A673 (cell line): ENCODE measurements at regions of chr19 and their contacts with region 1.

Region 1: DNA sequence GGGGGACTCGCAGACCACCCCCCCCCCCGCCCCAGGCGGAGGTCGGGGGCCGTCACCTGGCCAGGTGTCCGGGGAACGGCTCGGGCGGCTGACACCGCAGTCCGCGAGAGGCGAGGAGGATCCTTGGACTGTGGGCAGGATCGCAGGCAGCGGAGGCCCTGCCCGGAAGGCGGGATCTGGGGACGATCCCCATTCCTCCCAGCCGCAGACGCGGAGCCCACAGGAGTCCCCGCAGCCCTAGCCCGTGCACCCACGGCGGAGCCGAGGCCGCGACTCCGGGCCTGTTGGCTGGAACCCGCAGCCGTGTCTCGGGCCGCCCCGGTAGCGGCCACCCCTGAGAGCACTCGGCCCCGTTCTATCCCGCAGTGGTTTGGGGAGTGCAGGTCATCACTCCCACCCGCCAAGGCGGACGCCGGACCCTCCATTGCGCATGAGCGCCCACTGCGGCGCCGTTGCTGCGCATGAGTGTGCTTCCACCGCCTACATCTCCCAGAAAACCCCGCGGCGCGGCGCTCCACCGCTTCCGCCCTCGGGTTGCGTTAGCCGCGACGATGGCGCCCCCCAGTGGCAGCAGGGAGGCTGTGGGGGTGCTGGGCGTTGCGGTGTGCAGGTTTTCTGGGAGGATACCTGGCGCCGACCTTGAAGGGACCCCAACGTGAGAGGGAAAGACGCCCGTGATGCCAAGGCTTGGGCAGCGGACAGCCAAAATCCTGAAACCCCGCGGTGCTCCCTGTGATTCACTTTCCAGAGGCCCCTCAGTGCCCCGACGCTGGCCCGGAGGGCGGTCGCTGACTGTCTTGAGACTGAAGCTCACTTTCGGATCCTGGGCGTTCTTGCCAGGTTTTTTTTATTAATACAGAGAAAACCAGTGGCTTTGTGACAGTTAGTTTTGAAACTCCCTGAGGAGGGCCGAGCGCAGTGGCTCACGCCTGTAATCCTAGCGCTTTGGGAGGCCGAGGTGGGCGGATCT is 4.4 kb upstream of the ZNF329 start:
- DNase-seq: peak; percentile 96
- H3K4me3 ChIP-seq: peak overlapping the region; percentile 87
- H3K27ac ChIP-seq: peak overlapping the region; percentile 65
- H3K4me1 ChIP-seq: no peaks in the 10 kb centered on the region
- H3K27me3 ChIP-seq: no peaks in the 10 kb centered on the region
- CTCF ChIP-seq: peak; percentile 98

Region 2: DNA sequence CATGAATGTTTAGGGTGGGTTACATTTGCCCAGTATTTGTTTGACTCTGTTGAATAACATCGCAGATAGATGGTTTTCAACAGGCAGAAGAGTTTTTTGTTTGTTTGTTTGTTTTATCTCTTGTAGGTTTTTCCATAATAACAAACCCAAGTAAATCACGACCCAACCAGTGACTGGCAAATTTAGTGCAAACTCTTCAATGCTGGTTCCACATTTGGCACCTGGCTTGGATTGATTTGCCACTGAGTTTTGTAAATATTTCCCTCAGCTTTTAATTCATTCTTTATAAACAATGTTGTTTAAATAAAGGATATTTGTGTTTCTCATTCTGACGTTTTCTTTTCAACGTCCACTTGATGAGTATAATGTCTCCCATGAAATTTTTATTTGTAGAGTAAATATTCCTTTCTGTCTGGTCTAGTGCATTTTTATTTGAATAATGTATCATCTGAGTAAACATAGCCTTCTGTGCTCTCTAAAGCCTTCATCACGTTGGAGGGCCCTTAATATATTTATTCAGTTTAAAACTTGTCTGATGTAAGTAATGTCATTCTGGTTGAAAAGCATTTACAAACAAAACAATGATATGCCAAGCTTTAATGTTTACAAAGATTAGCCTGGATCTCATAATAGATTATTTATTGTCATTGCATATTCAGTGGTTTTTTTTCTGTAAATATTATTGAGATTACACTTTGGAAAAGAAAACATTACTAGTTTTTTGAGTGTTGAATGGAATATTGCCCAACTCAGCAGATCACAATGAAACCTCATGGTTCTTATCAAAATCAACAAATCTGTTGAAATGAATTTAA is 1224.1 kb before region 1 on chr19:
- CTCF ChIA-PET with region 1: interaction called, 11 read pairs
- POLR2A ChIA-PET with region 1: no interaction called
- intact Hi-C with region 1: no loop called
- DNase-seq: no peak
- H3K4me3 ChIP-seq: no peak overlapping the region
- H3K27ac ChIP-seq: no peak overlapping the region
- H3K4me1 ChIP-seq: no peaks in the 10 kb centered on the region
- H3K27me3 ChIP-seq: no peaks in the 10 kb centered on the region
- CTCF ChIP-seq: no peak

Region 3: GRCh38 chr19:57410877-57411671 is 743.9 kb before region 1 on chr19 and contains the start of gene ZNF17:
- CTCF ChIA-PET with region 1: interaction called, 4 read pairs
- POLR2A ChIA-PET with region 1: no interaction called
- intact Hi-C with region 1: loop called (anchors 2 kb)
- DNase-seq: peak; percentile 97
- H3K4me3 ChIP-seq: peak within 1 kb of the TSS; percentile 91
- H3K27ac ChIP-seq: peak within 1 kb of the TSS; percentile 63
- H3K4me1 ChIP-seq: no peaks in the 10 kb centered on the region
- H3K27me3 ChIP-seq: no peaks in the 10 kb centered on the region
- CTCF ChIP-seq: no peak
- total RNA-seq, gene ZNF17: 13.1 and 19.2 TPM in 2 replicates

Region 4: GRCh38 chr19:57559404-57560025 is 595.4 kb before region 1 on chr19 and contains the start of gene ZNF550:
- CTCF ChIA-PET with region 1: no interaction called
- POLR2A ChIA-PET with region 1: no interaction called
- intact Hi-C with region 1: loop called (anchors 10 kb)
- DNase-seq: peak; percentile 92
- H3K4me3 ChIP-seq: peak within 1 kb of the TSS; percentile 96
- H3K27ac ChIP-seq: peak within 1 kb of the TSS; percentile 77
- H3K4me1 ChIP-seq: no peaks in the 10 kb centered on the region
- H3K27me3 ChIP-seq: no peaks in the 10 kb centered on the region
- CTCF ChIP-seq: no peak
- total RNA-seq, gene ZNF550: 9.6 and 11.5 TPM in 2 replicates

Region 5: GRCh38 chr19:58021541-58022282 is 133.3 kb before region 1 on chr19:
- CTCF ChIA-PET with region 1: interaction called, 3 read pairs
- POLR2A ChIA-PET with region 1: interaction called, 3 read pairs
- intact Hi-C with region 1: loop called (anchors 2 kb)
- DNase-seq: peak; percentile 69
- H3K4me3 ChIP-seq: no peak overlapping the region
- H3K27ac ChIP-seq: no peak overlapping the region
- H3K4me1 ChIP-seq: no peaks in the 10 kb centered on the region
- H3K27me3 ChIP-seq: no peaks in the 10 kb centered on the region
- CTCF ChIP-seq: peak; percentile 66

Region 6: DNA sequence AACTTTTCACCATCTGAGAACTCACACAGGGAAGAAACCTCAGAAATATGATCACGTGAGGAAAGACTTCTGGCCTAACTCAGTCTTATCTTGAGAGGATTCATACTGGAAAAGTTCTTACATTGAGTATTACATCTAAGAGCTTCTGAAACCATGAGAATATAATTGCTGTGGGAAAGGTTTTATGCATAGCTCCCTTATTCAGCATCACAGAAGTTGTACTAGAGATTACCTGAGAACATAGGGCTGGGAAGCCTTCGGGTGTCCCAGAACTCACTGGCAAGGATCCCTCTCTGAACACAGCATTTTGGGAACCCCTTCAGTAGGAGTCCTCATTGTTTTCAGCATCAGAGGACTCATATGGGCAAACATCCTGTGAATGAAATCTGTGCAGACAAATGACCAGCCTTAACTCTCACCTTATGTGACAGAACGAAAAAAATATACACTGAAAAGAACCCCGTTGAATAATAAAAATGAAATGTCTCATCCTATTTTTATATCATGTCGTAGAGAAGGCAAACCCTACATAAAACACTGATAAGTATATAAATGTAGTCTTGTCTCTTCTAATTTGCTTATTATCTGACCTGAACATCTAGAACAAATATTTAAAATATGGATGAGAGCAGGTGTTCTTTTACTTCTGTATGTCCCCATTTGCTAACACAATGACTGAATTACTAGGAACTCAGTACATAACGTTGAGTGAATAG is 42.1 kb after region 1 on chr19:
- CTCF ChIA-PET with region 1: no interaction called
- POLR2A ChIA-PET with region 1: no interaction called
- intact Hi-C with region 1: no loop called
- DNase-seq: no peak
- H3K4me3 ChIP-seq: no peak overlapping the region
- H3K27ac ChIP-seq: no peak overlapping the region
- H3K4me1 ChIP-seq: no peaks in the 10 kb centered on the region
- H3K27me3 ChIP-seq: no peaks in the 10 kb centered on the region
- CTCF ChIP-seq: no peak